ENCODE measurements at regions of chr9 and their contacts with region 1.

Region 1: GRCh38 chr9:94065535-94065961 is 18.7 kb upstream of the PTPDC1 start:
- DNase-seq: peak; percentile 48 to 63
- H3K4me3 ChIP-seq: no peak overlapping the region
- H3K27ac ChIP-seq: no peak overlapping the region
- H3K4me1 ChIP-seq: no peaks in the 10 kb centered on the region
- H3K27me3 ChIP-seq: no peaks in the 10 kb centered on the region
- CTCF ChIP-seq: peak; percentile 90

Region 2: DNA sequence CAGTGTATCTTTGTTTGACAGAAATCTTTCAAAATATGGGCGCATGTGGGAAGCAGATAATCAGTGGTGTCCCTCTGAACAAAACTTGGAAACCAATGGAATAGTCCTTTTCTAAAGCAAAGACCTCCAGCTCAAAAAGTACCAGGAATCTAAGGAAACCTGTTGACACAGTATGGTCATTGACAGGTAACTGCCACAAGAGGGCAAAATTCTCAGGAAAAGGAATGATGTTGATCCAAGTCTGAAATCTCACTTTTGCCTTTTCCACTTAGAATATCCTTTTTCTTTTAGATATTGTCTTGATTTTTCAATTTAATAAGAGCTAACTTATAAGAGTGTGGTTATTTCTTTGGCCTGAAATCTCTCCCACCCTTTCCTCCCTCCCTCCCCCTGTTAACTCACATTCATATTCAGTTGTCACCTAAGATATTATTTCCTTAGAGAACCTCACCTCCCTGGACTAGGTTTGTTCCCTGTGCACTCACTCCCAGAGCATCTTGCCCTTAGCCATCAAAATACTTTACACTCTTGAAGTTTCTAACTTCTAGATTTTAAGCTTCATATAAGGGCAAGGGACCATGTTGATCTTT is 51.4 kb before region 1 on chr9:
- CTCF ChIA-PET with region 1: no interaction called
- POLR2A ChIA-PET with region 1: no interaction called
- intact Hi-C with region 1: loop called (anchors 5 kb)
- DNase-seq: peak in 1 of 2 experiments; percentile 16
- H3K4me3 ChIP-seq: no peak overlapping the region
- H3K27ac ChIP-seq: no peak overlapping the region
- H3K4me1 ChIP-seq: no peaks in the 10 kb centered on the region
- H3K27me3 ChIP-seq: no peaks in the 10 kb centered on the region
- CTCF ChIP-seq: peak; percentile 73

Region 3: DNA sequence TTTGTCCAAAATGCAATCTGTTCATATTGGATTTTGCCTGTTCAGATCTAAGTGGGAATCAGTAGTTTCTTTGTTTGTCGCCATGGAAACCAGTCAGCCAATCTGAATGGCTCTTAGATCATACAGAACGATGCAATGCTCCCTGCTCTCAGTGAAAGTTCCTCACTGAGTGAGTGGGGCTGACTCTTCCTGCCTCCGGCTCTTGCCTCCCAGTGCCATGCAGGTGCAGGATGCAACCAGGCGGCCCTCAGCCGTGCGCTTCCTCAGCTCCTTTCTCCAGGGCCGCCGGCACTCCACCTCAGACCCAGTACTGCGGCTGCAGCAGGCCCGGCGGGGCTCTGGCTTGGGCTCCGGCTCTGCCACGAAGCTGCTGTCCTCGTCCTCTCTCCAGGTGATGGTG is 18.8 kb after region 1 on chr9 and contains the start of gene PTPDC1:
- CTCF ChIA-PET with region 1: no interaction called
- POLR2A ChIA-PET with region 1: no interaction called
- intact Hi-C with region 1: no loop called
- DNase-seq: peak in 1 of 2 experiments; percentile 6
- H3K4me3 ChIP-seq: no peak within 1 kb of the TSS
- H3K27ac ChIP-seq: no peak within 1 kb of the TSS
- H3K4me1 ChIP-seq: no peaks in the 10 kb centered on the region
- H3K27me3 ChIP-seq: no peaks in the 10 kb centered on the region
- CTCF ChIP-seq: no peak
- total RNA-seq, gene PTPDC1: 6.5 and 7.4 TPM in 2 replicates

Region 4: GRCh38 chr9:94166237-94166963 is 100.9 kb after region 1 on chr9:
- CTCF ChIA-PET with region 1: no interaction called
- POLR2A ChIA-PET with region 1: no interaction called
- intact Hi-C with region 1: loop called (anchors 1 kb)
- DNase-seq: peak; percentile 94 to 98
- H3K4me3 ChIP-seq: peak overlapping the region; percentile 92
- H3K27ac ChIP-seq: peak overlapping the region; percentile 96
- H3K4me1 ChIP-seq: peaks cover 35% of the 10 kb centered on the region
- H3K27me3 ChIP-seq: no peaks in the 10 kb centered on the region
- CTCF ChIP-seq: no peak

Region 5: DNA sequence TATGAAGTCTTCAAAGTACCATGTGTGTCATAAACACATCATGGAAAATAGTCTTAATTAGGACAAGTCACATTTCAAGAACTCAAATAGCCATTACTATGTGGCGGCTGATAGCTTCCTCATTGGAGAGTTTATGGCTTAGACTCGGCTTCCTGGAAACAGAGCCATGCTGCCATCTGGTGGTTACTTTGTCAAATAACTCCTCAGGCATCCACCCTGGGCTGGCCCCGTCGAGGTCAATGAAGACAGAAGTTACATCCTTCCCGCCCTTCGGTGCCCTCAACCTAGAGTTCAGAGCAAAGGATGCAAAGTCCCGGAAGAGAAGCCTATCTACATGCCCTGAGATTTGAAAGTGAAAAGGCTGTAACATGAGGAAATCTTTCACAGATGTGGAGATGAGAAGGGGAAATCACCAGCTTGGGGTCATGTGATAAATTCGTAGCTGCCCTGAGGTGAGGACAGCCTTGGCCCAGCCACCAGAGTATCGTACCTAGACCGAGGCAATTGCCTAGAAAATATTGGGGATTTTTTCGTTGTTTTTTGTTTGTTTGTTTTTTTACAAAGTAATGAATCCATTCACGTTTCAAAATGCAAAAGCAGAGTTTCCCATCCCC is 148.1 kb after region 1 on chr9:
- CTCF ChIA-PET with region 1: interaction called, 19 read pairs
- POLR2A ChIA-PET with region 1: no interaction called
- intact Hi-C with region 1: loop called (anchors 1 kb)
- DNase-seq: peak; percentile 60 to 65
- H3K4me3 ChIP-seq: no peak overlapping the region
- H3K27ac ChIP-seq: no peak overlapping the region
- H3K4me1 ChIP-seq: no peaks in the 10 kb centered on the region
- H3K27me3 ChIP-seq: no peaks in the 10 kb centered on the region
- CTCF ChIP-seq: peak; percentile 87

Region 6: GRCh38 chr9:94250456-94250855 is 184.9 kb after region 1 on chr9:
- CTCF ChIA-PET with region 1: no interaction called
- POLR2A ChIA-PET with region 1: no interaction called
- intact Hi-C with region 1: no loop called
- DNase-seq: no peak
- H3K4me3 ChIP-seq: no peak overlapping the region
- H3K27ac ChIP-seq: no peak overlapping the region
- H3K4me1 ChIP-seq: no peaks in the 10 kb centered on the region
- H3K27me3 ChIP-seq: no peaks in the 10 kb centered on the region
- CTCF ChIP-seq: no peak

Region 7: GRCh38 chr9:94603259-94604160 is 538.0 kb after region 1 on chr9:
- CTCF ChIA-PET with region 1: no interaction called
- POLR2A ChIA-PET with region 1: no interaction called
- intact Hi-C with region 1: loop called (anchors 10 kb)
- DNase-seq: peak; percentile 45 to 73
- H3K4me3 ChIP-seq: no peak overlapping the region
- H3K27ac ChIP-seq: no peak overlapping the region
- H3K4me1 ChIP-seq: no peaks in the 10 kb centered on the region
- H3K27me3 ChIP-seq: no peaks in the 10 kb centered on the region
- CTCF ChIP-seq: peak; percentile 68